ENCODE measurements at regions of chr3 and their contacts with region 1.

Region 1: GRCh38 chr3:138347960-138348753 is at the start of gene MRAS:
- DNase-seq: peak; percentile 72
- H3K4me3 Mint-ChIP-seq: peak within 1 kb of the TSS; percentile 95
- H3K27ac Mint-ChIP-seq: peak within 1 kb of the TSS; percentile 64
- H3K4me1 Mint-ChIP-seq: peaks cover 6% of the 10 kb centered on the region
- H3K27me3 Mint-ChIP-seq: peaks cover 38% of the 10 kb centered on the region
- total RNA-seq, gene MRAS: 0.07 TPM in 1 of 2 replicates, not detected in the other

Region 2: DNA sequence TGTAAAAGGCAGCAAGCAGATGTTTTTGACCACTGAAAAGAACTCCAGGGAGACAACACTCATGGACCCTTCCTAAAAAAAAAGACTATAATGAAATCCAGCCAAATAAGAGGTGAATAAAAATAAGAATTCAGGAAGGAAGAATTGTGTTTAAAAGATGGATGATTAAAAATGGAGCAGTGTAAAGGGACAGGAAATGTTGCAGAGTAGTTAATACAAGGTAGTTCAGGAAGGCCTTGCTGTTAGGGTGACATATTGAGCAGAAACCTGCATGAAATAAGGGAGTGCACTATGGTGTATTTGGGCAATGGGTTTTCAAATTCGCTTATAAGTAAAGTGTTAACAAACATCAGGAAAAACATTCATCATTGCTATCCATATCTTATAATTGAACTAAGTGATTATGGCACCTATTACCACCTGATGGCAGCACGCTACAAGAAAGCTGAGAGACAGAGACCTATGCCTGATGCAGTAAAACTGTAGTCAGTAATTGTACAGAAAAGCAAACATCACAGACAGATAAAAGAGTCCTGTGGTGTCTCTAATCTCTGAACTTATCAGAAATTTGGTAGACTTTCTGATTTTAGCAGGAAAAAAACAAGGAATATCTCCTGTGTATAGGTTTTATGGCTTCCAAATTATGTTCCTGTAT is 167.7 kb before region 1 on chr3:
- intact Hi-C with region 1: loop called (anchors 1 kb)
- DNase-seq: peak; percentile 78
- H3K4me3 Mint-ChIP-seq: no peak overlapping the region
- H3K27ac Mint-ChIP-seq: no peak overlapping the region
- H3K4me1 Mint-ChIP-seq: peaks cover 5% of the 10 kb centered on the region
- H3K27me3 Mint-ChIP-seq: peaks cover 25% of the 10 kb centered on the region

Measured in activated CD4-positive, alpha-beta T cell treated with anti-CD3 and anti-CD28 coated beads, Interleukin-2, amount 10 ng/mL, durations not matched to agents 24 days and 14 days (primary cell).